Calu3 (cell line): ENCODE measurements at regions of chr17 and their contacts with region 1.

Region 1: GRCh38 chr17:58317421-58318064 is 11.1 kb downstream of the TSPOAP1 start:
- DNase-seq: peak; percentile 61
- H3K4me3 Mint-ChIP-seq: no peak overlapping the region
- H3K27ac Mint-ChIP-seq: no peak overlapping the region
- H3K4me1 Mint-ChIP-seq: no peaks in the 10 kb centered on the region
- H3K27me3 Mint-ChIP-seq: peaks cover 80% of the 10 kb centered on the region
- CTCF ChIP-seq: peak; percentile 49

Region 2: GRCh38 chr17:58447039-58447975 is 129.8 kb after region 1 on chr17:
- CTCF ChIA-PET with region 1: interaction called, 8 read pairs
- intact Hi-C with region 1: loop called (anchors 1 kb)
- DNase-seq: peak; percentile 74
- H3K4me3 Mint-ChIP-seq: no peak overlapping the region
- H3K27ac Mint-ChIP-seq: no peak overlapping the region
- H3K4me1 Mint-ChIP-seq: no peaks in the 10 kb centered on the region
- H3K27me3 Mint-ChIP-seq: peaks cover 31% of the 10 kb centered on the region
- CTCF ChIP-seq: peak; percentile 39